ENCODE measurements at regions of chr6 and their contacts with region 1.

Region 1: DNA sequence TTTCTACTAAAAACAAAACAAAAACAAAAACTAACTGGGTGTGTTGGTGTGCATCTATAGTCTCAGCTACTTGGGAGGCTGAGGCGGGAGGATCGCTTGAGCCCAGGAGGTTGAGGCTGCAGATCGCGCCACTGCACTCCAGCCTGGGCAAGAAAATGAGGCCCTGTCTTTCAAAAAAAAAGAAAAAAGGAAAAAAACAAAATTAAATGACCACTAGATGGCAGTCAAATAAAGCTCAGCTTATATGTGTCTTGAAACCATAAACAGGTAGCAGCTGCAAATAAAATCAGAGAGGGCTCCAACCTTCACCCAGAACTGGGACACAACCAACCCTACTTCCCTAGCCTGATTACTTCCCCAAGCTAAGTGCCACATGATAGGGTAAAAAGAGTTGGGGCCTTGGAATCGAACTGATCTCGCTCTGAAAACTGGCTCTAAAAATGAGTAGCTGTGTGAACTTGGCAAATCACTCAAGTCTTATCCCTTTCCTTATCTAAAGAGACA is 67.1 kb upstream of the ADGRF4 start:
- DNase-seq: peak; percentile 59
- H3K4me3 Mint-ChIP-seq: no peak overlapping the region
- H3K27ac Mint-ChIP-seq: no peak overlapping the region
- H3K4me1 Mint-ChIP-seq: no peaks in the 10 kb centered on the region
- H3K27me3 Mint-ChIP-seq: no peaks in the 10 kb centered on the region
- CTCF ChIP-seq: peak; percentile 58

Region 2: DNA sequence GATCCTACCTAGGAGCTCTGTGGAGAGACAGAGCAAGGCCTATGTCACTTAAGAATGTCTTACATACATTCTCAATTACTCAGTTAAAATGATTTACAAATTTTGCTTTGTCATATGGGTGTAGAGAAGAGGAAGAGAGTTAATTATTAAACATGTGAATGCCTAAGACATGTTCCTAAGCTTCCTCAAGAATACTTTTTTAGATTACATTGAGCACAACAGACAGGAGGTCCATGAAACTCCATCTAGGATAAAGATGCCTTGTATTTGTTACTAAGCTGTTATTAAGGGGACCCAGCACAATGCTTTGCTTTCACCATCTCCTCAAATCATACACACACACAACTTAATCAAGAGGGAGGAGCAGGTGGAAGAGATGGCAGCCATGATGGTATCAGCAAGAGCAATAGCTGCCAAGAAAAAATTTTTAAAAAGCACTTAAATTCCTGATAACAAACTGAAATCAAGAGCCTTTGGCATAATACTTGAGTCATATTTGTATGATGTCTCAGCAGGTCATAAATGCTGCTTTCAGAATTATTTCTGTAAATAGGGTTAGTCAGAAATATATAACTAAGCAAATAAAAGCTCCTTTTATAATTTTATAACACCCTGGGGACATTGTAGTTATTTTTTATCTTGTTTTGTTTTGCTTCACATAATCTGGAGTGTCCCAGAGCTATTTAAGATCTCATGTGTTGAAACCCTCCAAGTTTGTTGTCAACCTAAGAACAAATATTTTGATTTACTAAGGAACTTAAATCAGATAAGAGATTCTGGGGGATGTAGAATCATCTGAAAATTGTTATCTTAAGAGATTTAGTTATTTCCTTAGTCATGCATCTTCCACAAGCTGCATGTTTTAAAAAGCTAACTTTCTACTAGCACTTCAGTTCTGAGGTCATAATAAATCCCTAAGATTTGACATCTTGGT is 223.7 kb before region 1 on chr6:
- CTCF ChIA-PET with region 1: interaction called, 33 read pairs
- POLR2A ChIA-PET with region 1: no interaction called
- intact Hi-C with region 1: no loop called
- DNase-seq: no peak
- H3K4me3 Mint-ChIP-seq: no peak overlapping the region
- H3K27ac Mint-ChIP-seq: no peak overlapping the region
- H3K4me1 Mint-ChIP-seq: peaks cover 4% of the 10 kb centered on the region
- H3K27me3 Mint-ChIP-seq: no peaks in the 10 kb centered on the region
- CTCF ChIP-seq: no peak

Region 3: DNA sequence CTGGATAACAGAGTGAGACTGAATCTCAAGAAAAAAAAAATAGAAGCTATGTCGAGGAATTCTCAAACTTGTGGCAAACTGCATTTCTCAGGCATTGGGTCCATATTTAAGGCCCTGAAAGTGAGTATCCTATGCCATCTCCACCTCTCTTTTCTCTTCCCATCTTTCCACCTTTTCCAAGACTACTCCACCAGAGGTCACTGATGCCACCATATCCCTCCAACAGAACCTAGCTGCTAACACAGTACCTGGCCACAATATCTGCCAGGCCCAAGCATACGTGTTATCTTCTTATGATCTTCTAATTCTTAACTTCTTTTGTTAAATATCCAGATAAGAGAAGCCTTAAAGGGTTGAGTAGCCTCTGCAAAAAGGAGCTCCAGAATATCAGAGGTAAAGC is 58.9 kb after region 1 on chr6:
- CTCF ChIA-PET with region 1: interaction called, 13 read pairs
- POLR2A ChIA-PET with region 1: interaction called, 3 read pairs
- intact Hi-C with region 1: no loop called
- DNase-seq: peak; percentile 31
- H3K4me3 Mint-ChIP-seq: no peak overlapping the region
- H3K27ac Mint-ChIP-seq: no peak overlapping the region
- H3K4me1 Mint-ChIP-seq: no peaks in the 10 kb centered on the region
- H3K27me3 Mint-ChIP-seq: no peaks in the 10 kb centered on the region
- CTCF ChIP-seq: no peak

Region 4: GRCh38 chr6:47733879-47734558 is 102.7 kb after region 1 on chr6:
- CTCF ChIA-PET with region 1: interaction called, 288 read pairs
- POLR2A ChIA-PET with region 1: interaction called, 27 read pairs
- intact Hi-C with region 1: loop called (anchors 1 kb)
- DNase-seq: peak; percentile 65
- H3K4me3 Mint-ChIP-seq: no peak overlapping the region
- H3K27ac Mint-ChIP-seq: no peak overlapping the region
- H3K4me1 Mint-ChIP-seq: peaks cover 15% of the 10 kb centered on the region
- H3K27me3 Mint-ChIP-seq: no peaks in the 10 kb centered on the region
- CTCF ChIP-seq: peak; percentile 59

Region 5: DNA sequence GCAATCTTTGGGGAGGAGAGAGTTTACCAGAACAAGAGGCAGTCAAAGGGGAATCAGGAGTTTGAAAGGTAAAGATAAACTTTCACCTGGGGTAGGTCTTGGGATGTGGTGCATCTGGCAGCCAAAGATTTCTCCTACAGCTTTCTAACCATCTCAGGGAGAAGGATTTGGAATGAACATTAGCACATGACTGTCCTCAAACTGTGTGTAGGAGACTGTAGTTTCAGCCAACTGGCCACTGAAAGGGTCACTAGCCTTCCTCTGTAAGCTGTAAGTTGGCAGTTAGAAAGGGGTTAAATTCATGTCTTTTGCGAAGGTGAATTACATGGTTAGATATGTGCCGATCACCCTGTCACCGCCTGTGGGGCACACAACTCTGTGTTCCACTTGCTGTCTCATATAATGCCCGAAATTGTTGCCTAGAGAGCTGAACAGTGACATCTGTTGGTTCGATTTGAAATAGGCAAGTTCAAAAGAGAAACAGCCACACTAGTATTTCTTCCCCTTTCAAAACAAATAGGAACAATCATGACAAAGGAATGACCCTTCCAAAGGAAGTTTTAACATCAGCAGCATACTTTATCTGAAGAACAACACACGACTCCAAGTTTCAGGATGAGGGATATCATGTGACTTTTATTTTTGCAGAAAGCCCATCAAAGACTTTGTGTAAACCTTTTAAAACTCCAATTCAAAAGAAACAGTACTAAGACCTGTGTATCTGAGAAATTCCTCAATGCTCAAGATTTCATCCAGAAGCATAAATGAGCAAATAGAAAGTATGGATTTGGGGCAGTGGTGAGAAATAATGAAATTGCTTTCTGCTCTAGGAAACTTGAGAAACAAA is 149.4 kb after region 1 on chr6:
- CTCF ChIA-PET with region 1: interaction called, 133 read pairs
- POLR2A ChIA-PET with region 1: interaction called, 5 read pairs
- intact Hi-C with region 1: loop called (anchors 1 kb)
- DNase-seq: peak; percentile 76
- H3K4me3 Mint-ChIP-seq: no peak overlapping the region
- H3K27ac Mint-ChIP-seq: peak overlapping the region; percentile 39
- H3K4me1 Mint-ChIP-seq: no peaks in the 10 kb centered on the region
- H3K27me3 Mint-ChIP-seq: no peaks in the 10 kb centered on the region
- CTCF ChIP-seq: peak; percentile 41

Region 6: GRCh38 chr6:47844881-47845280 is 213.6 kb after region 1 on chr6:
- CTCF ChIA-PET with region 1: no interaction called
- POLR2A ChIA-PET with region 1: no interaction called
- intact Hi-C with region 1: no loop called
- DNase-seq: no peak
- H3K4me3 Mint-ChIP-seq: no peak overlapping the region
- H3K27ac Mint-ChIP-seq: no peak overlapping the region
- H3K4me1 Mint-ChIP-seq: no peaks in the 10 kb centered on the region
- H3K27me3 Mint-ChIP-seq: no peaks in the 10 kb centered on the region
- CTCF ChIP-seq: no peak

Measured in MCF 10A (cell line).